ENCODE measurements at regions of chr16 and their contacts with region 1.

Region 1: GRCh38 chr16:72832621-72833248 is 215.2 kb downstream of the ZFHX3 start:
- DNase-seq: peak; percentile 76 to 87
- ATAC-seq: peak; percentile 92 to 94
- H3K4me3 ChIP-seq: no peak overlapping the region
- H3K27ac ChIP-seq: peak overlapping the region; percentile 63 to 73 (median 70)
- H3K4me1 ChIP-seq: peaks cover 27 to 32% of the 10 kb centered on the region in 2 donors
- H3K27me3 ChIP-seq: no peaks in the 10 kb centered on the region
- CTCF ChIP-seq: peak; percentile 93 to 99 (median 94)
- POLR2A ChIP-seq: no peak

Region 2: DNA sequence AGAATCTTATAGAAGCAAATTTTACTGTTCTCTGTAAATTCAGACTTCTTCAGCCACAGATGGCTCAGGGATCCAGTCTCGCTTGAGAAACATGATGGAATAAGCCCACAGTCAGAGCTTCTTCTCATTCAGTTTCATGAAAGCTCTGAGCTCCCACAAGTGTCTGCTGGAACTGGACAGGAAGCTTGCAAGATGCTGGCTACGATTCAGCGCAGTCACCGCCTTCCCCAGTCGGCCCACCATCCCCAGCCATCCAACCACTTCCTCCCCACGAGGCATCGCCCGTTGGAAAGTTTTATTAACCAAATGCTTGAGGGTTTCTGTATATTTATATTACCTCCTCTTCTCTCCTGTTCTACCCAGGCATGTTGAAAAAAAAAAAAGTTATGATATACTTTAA is 43.5 kb after region 1 on chr16:
- in situ Hi-C with region 1: no loop called
- intact Hi-C with region 1: loop called (anchors 5 kb)
- DNase-seq: peak; percentile 38 to 53
- ATAC-seq: peak in 1 of 2 donors; percentile 22
- H3K4me3 ChIP-seq: no peak overlapping the region
- H3K27ac ChIP-seq: peak overlapping the region; percentile 3 to 60 (median 58)
- H3K4me1 ChIP-seq: peaks cover 35 to 44% of the 10 kb centered on the region in 2 donors
- H3K27me3 ChIP-seq: no peaks in the 10 kb centered on the region
- CTCF ChIP-seq: no peak
- POLR2A ChIP-seq: no peak

Region 3: GRCh38 chr16:72938795-72939164 is 106.0 kb after region 1 on chr16:
- in situ Hi-C with region 1: no loop called
- intact Hi-C with region 1: loop called (anchors 2 kb)
- DNase-seq: peak; percentile 90 to 93
- ATAC-seq: peak; percentile 87
- H3K4me3 ChIP-seq: peak overlapping the region; percentile 31 to 47 (median 36)
- H3K27ac ChIP-seq: peak overlapping the region; percentile 85 to 95 (median 88)
- H3K4me1 ChIP-seq: peaks cover 59 to 64% of the 10 kb centered on the region in 2 donors
- H3K27me3 ChIP-seq: no peaks in the 10 kb centered on the region
- CTCF ChIP-seq: no peak
- POLR2A ChIP-seq: peak in 1 of 2 donors; percentile 34

Region 4: GRCh38 chr16:72989579-72990551 is 157.1 kb after region 1 on chr16:
- in situ Hi-C with region 1: no loop called
- intact Hi-C with region 1: loop called (anchors 5 kb)
- DNase-seq: peak; percentile 97 to 99
- ATAC-seq: peak; percentile 61 to 66
- H3K4me3 ChIP-seq: peak overlapping the region; percentile 23 to 41 (median 36)
- H3K27ac ChIP-seq: peak overlapping the region; percentile 89 to 99 (median 96)
- H3K4me1 ChIP-seq: peaks cover 92 to 95% of the 10 kb centered on the region in 2 donors
- H3K27me3 ChIP-seq: no peaks in the 10 kb centered on the region
- CTCF ChIP-seq: no peak
- POLR2A ChIP-seq: peak; percentile 34 to 64

Region 5: GRCh38 chr16:73047518-73048291 is 215.0 kb after region 1 on chr16 and contains the start of gene ZFHX3:
- in situ Hi-C with region 1: loop called in 3 of 4 experiments (anchors 10 to 25 kb)
- intact Hi-C with region 1: loop called (anchors 2 kb)
- DNase-seq: peak; percentile 81 to 90
- ATAC-seq: peak; percentile 54 to 56
- H3K4me3 ChIP-seq: peak within 1 kb of the TSS; percentile 85 to 97 (median 89)
- H3K27ac ChIP-seq: peak within 1 kb of the TSS; percentile 95 to 99 (median 99)
- H3K4me1 ChIP-seq: peaks cover 86 to 89% of the 10 kb centered on the region in 2 donors
- H3K27me3 ChIP-seq: no peaks in the 10 kb centered on the region
- CTCF ChIP-seq: peak in 2 of 5 experiments; percentile 2 to 33
- POLR2A ChIP-seq: peak; percentile 78 to 91
- total RNA-seq, gene ZFHX3: 14.0 to 28.5 (median 27.3) TPM

Region 6: GRCh38 chr16:73068541-73069401 is 236.0 kb after region 1 on chr16:
- in situ Hi-C with region 1: loop called in 3 of 4 experiments (anchors 10 to 25 kb)
- intact Hi-C with region 1: no loop called
- DNase-seq: peak; percentile 79 to 93
- ATAC-seq: peak; percentile 79
- H3K4me3 ChIP-seq: peak overlapping the region in 2 of 4 donors; percentile 13 to 59
- H3K27ac ChIP-seq: peak overlapping the region; percentile 89 to 99 (median 95)
- H3K4me1 ChIP-seq: peaks cover 51 to 60% of the 10 kb centered on the region in 2 donors
- H3K27me3 ChIP-seq: peaks cover 0 to 15% (median 5%) of the 10 kb centered on the region in 3 donors
- CTCF ChIP-seq: no peak
- POLR2A ChIP-seq: peak; percentile 62 to 77